CD8-positive, alpha-beta T cell (primary cell): ENCODE measurements at regions of chr11 and their contacts with region 1.

Region 1: DNA sequence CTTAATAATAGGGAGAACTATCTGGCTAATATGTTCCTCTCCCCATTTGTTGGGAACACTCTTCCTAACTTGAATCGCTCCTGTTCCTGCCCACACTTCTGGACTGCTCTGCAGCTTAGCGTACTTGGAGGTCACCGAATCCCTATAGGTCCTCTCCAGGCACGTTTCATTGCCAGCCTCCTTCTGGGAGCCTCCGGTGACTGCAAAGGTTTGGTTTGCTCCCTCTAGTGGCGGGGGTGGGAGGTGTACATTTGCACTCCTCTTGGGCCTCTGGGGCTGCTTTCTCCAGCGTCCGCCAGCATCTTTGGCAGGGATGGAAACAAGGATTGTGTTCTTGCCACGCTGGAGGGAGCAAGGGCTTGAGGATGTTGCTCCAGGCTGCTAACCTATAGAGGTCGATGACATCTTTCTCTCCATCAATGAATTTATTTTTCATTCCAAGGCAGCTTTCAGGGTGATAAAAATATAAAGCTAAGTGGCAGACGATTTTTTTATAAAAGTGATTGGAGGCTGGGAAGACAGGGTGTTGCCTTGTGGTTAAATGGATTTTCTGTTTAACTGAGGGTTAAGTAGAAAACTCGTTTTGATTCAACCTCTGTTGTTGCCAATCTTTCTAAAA is 48.7 kb downstream of the TSPAN18 start:
- DNase-seq: peak; percentile 10 to 73 (median 52)
- ATAC-seq: peak; percentile 49
- H3K4me3 ChIP-seq: no peak overlapping the region
- H3K4me3 Mint-ChIP-seq: no peak overlapping the region
- H3K27ac ChIP-seq: no peak overlapping the region
- H3K27ac Mint-ChIP-seq: no peak overlapping the region
- H3K4me1 ChIP-seq: no peaks in the 10 kb centered on the region
- H3K4me1 Mint-ChIP-seq: peaks cover 5% of the 10 kb centered on the region
- H3K27me3 ChIP-seq: no peaks in the 10 kb centered on the region
- H3K27me3 Mint-ChIP-seq: no peaks in the 10 kb centered on the region
- CTCF ChIP-seq: peak; percentile 76

Region 2: DNA sequence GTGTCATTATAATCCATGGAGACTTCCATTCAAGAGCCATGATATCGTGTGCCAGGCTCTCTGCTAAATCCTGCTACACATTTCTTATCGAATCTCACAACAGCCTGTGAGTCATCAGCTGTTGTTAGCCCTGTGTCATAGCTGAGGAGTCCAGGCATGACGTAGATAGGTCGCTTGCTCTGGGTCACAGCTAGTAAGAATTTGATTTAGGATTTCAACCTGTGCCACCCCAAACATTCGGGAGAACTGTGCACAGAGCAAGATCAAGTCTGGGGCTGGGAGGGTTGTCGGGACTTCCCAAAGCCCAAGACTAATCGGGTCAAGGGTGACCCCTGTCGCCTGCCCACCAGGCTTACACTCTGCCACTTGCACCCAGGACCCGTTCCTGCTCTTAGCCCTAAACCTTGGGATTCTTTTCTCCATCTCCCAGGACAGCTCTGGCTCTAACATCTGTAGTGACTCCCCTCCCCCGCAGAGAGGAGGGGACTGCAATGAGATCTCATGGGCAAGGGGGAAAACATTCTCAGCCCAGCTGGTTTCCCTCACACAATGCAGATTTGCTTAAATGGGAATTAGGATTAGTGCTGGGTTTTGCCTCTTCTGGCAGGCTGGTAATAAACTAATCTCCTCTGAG is 14.4 kb before region 1 on chr11:
- CTCF ChIA-PET with region 1: interaction called, 19 read pairs
- POLR2A ChIA-PET with region 1: no interaction called
- intact Hi-C with region 1: no loop called
- DNase-seq: no peak
- ATAC-seq: no peak
- H3K4me3 ChIP-seq: no peak overlapping the region
- H3K4me3 Mint-ChIP-seq: no peak overlapping the region
- H3K27ac ChIP-seq: no peak overlapping the region
- H3K27ac Mint-ChIP-seq: no peak overlapping the region
- H3K4me1 ChIP-seq: no peaks in the 10 kb centered on the region
- H3K4me1 Mint-ChIP-seq: no peaks in the 10 kb centered on the region
- H3K27me3 ChIP-seq: no peaks in the 10 kb centered on the region
- H3K27me3 Mint-ChIP-seq: no peaks in the 10 kb centered on the region
- CTCF ChIP-seq: no peak

Region 3: DNA sequence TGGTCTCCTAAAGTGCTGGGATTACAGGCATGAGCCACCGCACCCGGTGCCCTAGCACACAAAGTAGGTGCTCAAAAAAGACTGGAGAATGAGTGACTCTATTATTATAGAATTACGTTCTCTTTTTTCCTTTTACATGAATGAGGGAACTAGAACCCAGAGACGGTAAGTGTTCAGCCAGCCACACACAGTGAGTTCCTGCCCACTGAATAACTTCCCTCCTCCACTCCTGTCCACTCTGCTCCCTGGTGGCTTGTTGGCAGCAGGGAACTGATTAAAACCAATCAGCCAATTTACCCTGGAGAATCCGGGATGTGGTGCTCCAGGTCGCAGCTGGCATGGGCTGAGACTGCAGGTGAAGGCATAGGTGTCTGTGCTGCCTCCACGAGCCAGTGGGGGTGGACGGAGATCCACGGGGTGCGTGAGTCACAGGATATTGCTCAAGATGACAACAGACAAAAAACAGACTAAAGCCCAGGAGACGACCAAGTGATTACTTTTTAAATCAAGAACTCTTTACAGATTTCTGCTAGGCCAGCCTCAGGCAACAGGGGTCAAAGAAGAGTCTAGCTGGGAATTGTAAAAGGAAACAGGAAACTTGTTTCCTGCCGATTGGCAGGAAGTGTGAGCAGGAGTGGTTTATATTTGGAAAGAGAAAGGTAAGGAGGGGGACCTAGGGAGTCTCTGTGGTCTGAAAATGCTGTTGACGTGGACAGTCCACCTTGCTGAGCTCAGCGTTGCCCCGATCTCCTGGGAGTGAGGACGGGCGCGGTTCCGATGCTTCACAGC is 270.4 kb after region 1 on chr11:
- CTCF ChIA-PET with region 1: no interaction called
- POLR2A ChIA-PET with region 1: no interaction called
- intact Hi-C with region 1: no loop called
- DNase-seq: peak in 3 of 9 experiments; percentile 21 to 37 (median 26)
- ATAC-seq: no peak
- H3K4me3 ChIP-seq: no peak overlapping the region
- H3K4me3 Mint-ChIP-seq: no peak overlapping the region
- H3K27ac ChIP-seq: no peak overlapping the region
- H3K27ac Mint-ChIP-seq: no peak overlapping the region
- H3K4me1 ChIP-seq: no peaks in the 10 kb centered on the region
- H3K4me1 Mint-ChIP-seq: peaks cover 5% of the 10 kb centered on the region
- H3K27me3 ChIP-seq: no peaks in the 10 kb centered on the region
- H3K27me3 Mint-ChIP-seq: no peaks in the 10 kb centered on the region
- CTCF ChIP-seq: no peak